Left ventricle myocardium superior (tissue), 1 donor: ENCODE measurements at regions of chr3 and their contacts with region 1.

Region 1: DNA sequence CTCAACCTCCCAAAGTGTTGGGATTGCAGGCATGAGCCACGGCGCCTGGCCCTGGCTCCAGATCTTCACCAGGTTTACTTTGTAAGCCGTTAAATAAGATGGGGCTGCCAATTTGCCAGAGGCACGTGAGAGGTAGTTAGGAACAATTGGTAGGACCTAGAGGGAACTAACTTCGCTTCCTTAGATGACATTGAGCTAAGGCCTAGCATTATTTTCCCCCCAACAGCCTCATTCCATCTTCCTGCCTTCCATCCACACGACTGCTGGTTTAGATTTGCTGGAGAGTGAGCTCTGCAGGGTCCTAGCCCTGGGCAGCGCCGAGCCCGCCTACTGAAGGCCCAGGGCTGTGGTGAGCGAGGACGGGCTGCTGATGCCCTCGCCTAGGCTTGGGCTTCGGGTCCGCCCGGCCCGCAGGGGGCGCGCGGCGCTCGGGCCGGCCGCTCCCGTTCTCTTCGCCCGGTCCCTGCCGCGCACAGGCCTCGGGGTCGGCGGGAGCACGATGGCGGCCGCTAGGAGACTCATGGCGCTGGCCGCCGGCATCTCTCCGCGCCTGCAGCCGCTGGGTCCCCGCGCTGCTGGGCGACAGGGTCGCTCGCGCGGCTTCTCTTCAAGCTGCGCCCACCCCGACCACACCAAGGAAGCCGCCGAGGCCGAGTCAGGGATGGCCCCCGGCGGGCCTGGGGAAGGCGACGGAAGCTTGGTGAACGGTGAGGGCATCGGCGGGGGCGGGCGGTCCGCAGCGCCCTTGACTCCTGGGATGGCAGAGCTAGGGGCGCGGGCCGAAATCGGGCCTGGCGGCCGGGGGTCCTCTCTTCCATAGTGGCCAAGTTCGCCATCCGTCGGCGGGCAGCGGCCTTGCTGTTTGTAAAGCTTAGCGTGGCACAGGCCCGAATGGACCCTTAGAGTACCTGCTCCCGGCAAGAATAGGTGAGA is 21.9 kb downstream of the DHX30 start:
- DNase-seq: peak; percentile 89
- ATAC-seq: peak; percentile 99

Region 2: DNA sequence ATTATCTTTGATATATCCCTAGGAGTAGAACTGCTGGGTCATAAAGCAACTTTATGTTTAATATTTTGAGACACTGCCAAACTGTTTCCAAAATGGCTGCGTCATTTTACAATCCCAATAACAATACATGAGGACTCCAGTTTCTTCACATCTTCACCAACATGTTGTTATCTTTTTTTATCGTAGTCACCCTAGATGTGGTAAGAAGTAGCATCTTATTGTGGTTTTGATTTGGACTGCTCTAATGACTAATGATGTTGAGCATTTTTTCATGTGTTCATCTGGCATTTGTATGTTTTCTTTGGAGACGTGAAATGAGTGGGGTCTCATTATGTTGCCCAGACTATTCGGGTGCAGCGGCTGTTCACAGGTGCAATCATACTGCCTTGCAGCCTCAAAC is 107.6 kb after region 1 on chr3:
- intact Hi-C with region 1: no loop called
- DNase-seq: no peak
- ATAC-seq: no peak

Region 3: GRCh38 chr3:48058091-48058490 is 233.3 kb after region 1 on chr3:
- intact Hi-C with region 1: no loop called
- DNase-seq: no peak
- ATAC-seq: peak; percentile 57

Region 4: DNA sequence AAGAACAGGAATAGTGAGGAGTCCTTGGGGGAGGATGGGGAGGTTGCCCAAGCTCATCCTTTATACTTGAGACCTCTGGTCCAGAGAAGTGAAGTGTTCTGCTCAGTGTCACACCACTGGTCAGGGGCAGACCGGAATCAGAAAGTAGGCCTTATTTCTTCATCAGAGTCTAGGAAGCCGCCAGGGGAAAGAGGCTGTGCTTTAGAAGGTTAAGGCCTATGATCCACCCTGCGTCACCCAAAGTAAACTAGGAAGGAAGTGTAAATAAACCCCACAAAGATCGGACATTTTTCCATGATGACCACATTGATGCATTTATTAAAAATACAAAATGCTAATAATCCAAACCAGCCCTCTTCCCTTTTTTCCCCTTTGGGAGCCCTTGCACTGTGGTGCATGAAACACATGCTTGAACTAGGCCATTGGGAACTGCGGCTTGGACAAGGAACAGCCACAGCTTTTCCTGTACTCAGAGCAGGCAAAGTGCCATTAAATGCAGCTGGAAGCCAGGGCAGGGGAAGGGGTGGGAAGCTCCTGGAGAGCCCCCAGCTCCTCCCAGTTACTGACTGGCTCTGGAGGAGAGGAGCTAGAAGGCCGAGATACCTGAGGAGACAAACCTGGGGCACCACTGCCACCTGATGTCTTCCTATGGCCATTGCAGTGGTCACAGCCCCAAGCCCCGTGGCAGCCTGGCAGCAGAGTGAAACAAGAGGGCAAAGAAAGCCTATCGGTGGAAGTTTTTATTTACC is 326.4 kb after region 1 on chr3:
- intact Hi-C with region 1: loop called (anchors 5 kb)
- DNase-seq: peak; percentile 85
- ATAC-seq: peak; percentile 97

Region 5: DNA sequence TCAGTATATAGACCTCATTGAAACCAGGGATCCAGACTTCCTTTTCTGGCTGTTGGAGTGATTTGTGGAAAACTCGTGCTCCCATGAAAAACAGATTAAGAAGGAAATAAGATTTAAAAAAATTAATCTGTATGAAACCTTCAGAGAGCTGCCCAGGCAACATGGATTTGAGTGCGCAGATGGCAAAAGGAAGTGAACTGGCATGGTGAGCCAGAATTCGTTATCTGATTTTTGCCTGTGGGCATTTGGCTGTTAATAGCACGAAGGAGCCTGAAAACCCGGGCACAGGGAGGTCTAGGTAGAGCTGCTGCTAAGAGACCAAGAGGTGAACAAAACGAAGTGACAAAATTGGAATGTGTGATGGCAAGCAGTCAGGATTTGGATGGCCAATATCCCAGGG is 527.7 kb after region 1 on chr3:
- intact Hi-C with region 1: no loop called
- DNase-seq: no peak
- ATAC-seq: no peak